PC-9 (cell line): ENCODE measurements at regions of chr2 and their contacts with region 1.

Region 1: DNA sequence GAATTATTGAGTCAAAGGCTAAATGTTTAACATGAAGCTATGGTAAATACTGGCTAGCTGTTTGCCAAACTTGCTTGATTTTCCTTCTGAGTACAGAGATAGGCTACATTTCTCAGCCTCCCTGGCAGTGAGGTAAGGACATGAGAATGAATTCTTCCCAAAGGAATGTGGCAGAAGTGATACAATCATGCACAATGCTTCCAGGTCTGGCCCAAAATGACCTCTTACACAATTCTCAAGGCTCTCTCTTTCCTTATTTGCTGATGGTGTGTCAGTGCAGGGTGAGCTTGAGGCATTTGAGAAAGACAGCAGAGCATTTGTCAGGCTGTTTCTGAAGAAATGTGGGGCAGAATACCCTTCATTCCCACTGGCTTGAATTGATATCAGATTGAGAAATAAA is 95.6 kb upstream of the NABP1 start:
- DNase-seq: peak; percentile 51 to 91
- H3K4me3 ChIP-seq: no peak overlapping the region
- H3K27ac ChIP-seq: peak overlapping the region; percentile 94
- H3K4me1 ChIP-seq: peaks cover 31% of the 10 kb centered on the region
- H3K27me3 ChIP-seq: no peaks in the 10 kb centered on the region
- CTCF ChIP-seq: no peak

Region 2: GRCh38 chr2:191593622-191594416 is 11.5 kb after region 1 on chr2:
- CTCF ChIA-PET with region 1: no interaction called
- POLR2A ChIA-PET with region 1: no interaction called
- intact Hi-C with region 1: loop called (anchors 1 kb)
- DNase-seq: peak; percentile 59 to 87
- H3K4me3 ChIP-seq: no peak overlapping the region
- H3K27ac ChIP-seq: peak overlapping the region; percentile 91
- H3K4me1 ChIP-seq: peaks cover 21% of the 10 kb centered on the region
- H3K27me3 ChIP-seq: no peaks in the 10 kb centered on the region
- CTCF ChIP-seq: no peak

Region 3: GRCh38 chr2:191620145-191620544 is 37.8 kb after region 1 on chr2:
- CTCF ChIA-PET with region 1: no interaction called
- POLR2A ChIA-PET with region 1: interaction called, 11 read pairs
- intact Hi-C with region 1: loop called (anchors 2 kb)
- DNase-seq: peak; percentile 44 to 84
- H3K4me3 ChIP-seq: no peak overlapping the region
- H3K27ac ChIP-seq: peak overlapping the region; percentile 86
- H3K4me1 ChIP-seq: peaks cover 71% of the 10 kb centered on the region
- H3K27me3 ChIP-seq: no peaks in the 10 kb centered on the region
- CTCF ChIP-seq: no peak